HAP-1 (cell line): ENCODE measurements at regions of chr3 and their contacts with region 1.

Region 1: GRCh38 chr3:139935016-139935865 is at the start of gene CLSTN2:
- DNase-seq: peak in 1 of 2 experiments; percentile 62
- H3K4me3 ChIP-seq: peak within 1 kb of the TSS; percentile 18
- H3K4me1 ChIP-seq: no peaks in the 10 kb centered on the region
- H3K27me3 ChIP-seq: peaks cover 31% of the 10 kb centered on the region

Region 2: DNA sequence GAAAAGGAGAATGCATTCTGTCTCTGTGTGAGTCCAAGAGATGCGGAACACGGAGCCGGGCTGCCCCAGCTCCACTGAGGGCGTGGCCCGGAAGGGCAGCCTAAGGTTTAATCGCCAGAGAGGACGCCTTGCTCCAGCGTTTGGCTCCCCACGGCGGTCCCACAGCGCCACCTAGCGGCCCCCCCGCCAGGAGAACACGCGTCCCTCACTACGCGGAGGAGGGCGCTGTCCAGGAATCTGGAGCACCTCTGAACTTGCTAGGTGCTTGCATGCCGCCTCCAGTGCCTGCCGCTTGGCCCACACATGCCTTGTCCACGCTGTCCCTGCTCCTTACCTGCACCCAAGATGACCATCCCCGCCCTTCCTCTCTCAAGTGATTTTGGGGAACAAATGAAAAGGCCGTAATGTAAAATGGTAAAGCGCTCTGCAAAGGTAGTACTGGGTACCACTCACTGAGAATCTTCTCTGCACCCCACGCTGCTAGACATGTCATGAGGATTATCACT is 605.8 kb before region 1 on chr3:
- in situ Hi-C with region 1: no loop called
- DNase-seq: peak; percentile 70 to 95
- H3K4me3 ChIP-seq: peak overlapping the region; percentile 21
- H3K4me1 ChIP-seq: no peaks in the 10 kb centered on the region
- H3K27me3 ChIP-seq: peaks cover 10% of the 10 kb centered on the region

Region 3: DNA sequence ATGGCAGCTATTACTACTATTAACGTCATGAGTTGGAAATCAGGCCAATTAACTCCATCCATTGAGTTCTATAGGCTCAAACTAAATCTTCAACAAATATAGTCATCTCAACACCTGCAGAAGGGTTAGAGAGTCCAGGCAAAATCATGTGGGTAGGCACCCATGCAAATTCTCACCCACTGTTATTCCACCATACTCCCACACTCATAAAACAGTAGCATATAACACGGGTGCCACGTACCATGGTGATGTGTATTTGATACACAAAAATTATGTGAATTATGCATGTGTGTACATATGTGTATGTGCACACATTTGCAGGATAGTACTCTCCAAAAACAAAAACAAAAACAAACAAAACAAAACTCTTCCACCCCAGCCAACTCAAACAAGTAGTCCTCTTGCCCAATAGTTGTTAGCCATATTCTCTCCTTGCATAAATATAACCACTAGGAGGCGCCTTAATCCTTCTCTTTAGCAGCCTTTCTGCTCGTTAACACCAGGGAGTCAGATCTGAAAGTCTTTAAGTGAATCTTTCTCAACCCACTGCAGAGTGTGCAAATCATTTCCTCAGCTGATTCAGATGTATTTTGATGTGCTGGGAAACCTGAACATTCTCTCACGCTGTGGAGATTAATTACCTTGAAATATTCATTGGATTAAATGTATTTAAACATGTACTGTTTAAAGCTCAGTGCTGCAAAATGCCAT is 507.8 kb before region 1 on chr3:
- in situ Hi-C with region 1: loop called (anchors 25 kb)
- DNase-seq: peak; percentile 29 to 72
- H3K4me3 ChIP-seq: no peak overlapping the region
- H3K4me1 ChIP-seq: no peaks in the 10 kb centered on the region
- H3K27me3 ChIP-seq: no peaks in the 10 kb centered on the region

Region 4: GRCh38 chr3:140736863-140737460 is 801.7 kb after region 1 on chr3:
- in situ Hi-C with region 1: loop called (anchors 25 kb)
- DNase-seq: peak; percentile 46 to 68
- H3K4me3 ChIP-seq: no peak overlapping the region
- H3K4me1 ChIP-seq: no peaks in the 10 kb centered on the region
- H3K27me3 ChIP-seq: no peaks in the 10 kb centered on the region

Region 5: GRCh38 chr3:140863580-140864009 is 928.4 kb after region 1 on chr3:
- in situ Hi-C with region 1: loop called (anchors 25 kb)
- DNase-seq: peak; percentile 37 to 76
- H3K4me3 ChIP-seq: no peak overlapping the region
- H3K4me1 ChIP-seq: no peaks in the 10 kb centered on the region
- H3K27me3 ChIP-seq: no peaks in the 10 kb centered on the region